K562 (cell line): ENCODE measurements at regions of chr1 and their contacts with region 1.

Region 1: DNA sequence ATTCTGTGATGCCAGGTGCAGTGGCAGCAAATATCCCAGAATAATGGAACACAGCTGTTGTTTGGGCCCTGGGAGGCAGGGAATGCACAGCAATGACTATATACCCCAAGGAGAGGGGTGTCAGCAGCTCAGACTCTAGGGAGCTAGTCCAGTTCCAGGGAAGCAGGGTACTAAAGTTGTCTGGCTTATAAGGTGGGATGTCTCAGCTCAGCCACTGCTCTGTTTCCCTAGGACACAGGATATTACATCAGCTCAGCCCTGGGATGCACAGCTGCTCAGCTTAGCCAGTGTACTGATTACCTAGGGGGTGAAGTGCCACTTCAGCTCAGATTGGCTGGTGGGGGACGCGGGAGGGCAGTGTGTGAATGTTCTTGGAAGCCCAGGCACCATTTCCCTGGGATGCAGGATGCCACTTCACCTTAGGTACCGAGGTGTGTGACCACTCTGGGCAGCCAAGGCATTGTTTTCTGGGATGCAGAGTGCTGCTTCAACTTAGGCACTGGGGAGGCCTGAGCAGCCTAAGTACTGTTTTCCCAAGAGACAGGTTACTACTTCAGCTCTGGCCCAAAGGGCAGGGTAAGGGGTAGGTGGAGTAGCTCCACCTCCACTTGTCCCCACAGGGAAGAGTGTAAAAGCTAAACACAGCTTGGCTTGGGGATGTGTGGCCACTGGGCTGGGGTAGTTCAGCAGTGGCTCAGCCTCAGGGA is 59.4 kb downstream of the DIPK1A start:
- DNase-seq: no peak
- ATAC-seq: peak; percentile 70
- H3K4me3 ChIP-seq: no peak overlapping the region
- H3K27ac ChIP-seq: no peak overlapping the region
- H3K4me1 ChIP-seq: 0 out of 5 replicates have a peak, but pooled peaks cover 0 to 5% of the 10 kb centered on the region in 2 experiments
- H3K27me3 ChIP-seq: no peaks in the 10 kb centered on the region
- CTCF ChIP-seq: no peak
- EP300 ChIP-seq: no peak
- POLR2A ChIP-seq: no peak
- RAD21 ChIP-seq: no peak

Region 2: GRCh38 chr1:92817986-92818764 is 83.7 kb before region 1 on chr1:
- CTCF ChIA-PET with region 1: no interaction called
- POLR2A ChIA-PET with region 1: no interaction called
- in situ Hi-C with region 1: no loop called
- intact Hi-C with region 1: no loop called
- DNase-seq: peak; percentile 42 to 57 (median 53)
- ATAC-seq: peak; percentile 81
- H3K4me3 ChIP-seq: no peak overlapping the region
- H3K27ac ChIP-seq: no peak overlapping the region
- H3K4me1 ChIP-seq: no peaks in the 10 kb centered on the region
- H3K27me3 ChIP-seq: no peaks in the 10 kb centered on the region
- CTCF ChIP-seq: peak; percentile 70 to 80 (median 71)
- EP300 ChIP-seq: no peak
- POLR2A ChIP-seq: no peak
- RAD21 ChIP-seq: peak; percentile 61 to 83

Region 3: GRCh38 chr1:92951141-92951582 is 49.3 kb after region 1 on chr1:
- CTCF ChIA-PET with region 1: no interaction called
- POLR2A ChIA-PET with region 1: no interaction called
- in situ Hi-C with region 1: no loop called
- intact Hi-C with region 1: loop called (anchors 5 kb)
- DNase-seq: peak in 2 of 4 experiments; percentile 49 to 67
- ATAC-seq: peak; percentile 86
- H3K4me3 ChIP-seq: no peak overlapping the region
- H3K27ac ChIP-seq: peak overlapping the region; percentile 23; the same call in 2 of the 3 replicates
- H3K4me1 ChIP-seq: peaks cover 6 to 28% of the 10 kb centered on the region in 2 experiments; a peak in 4 of 5 replicates
- H3K27me3 ChIP-seq: no peaks in the 10 kb centered on the region
- CTCF ChIP-seq: peak in 2 of 3 experiments; percentile 36 to 38; a peak in 4 of 6 replicates
- EP300 ChIP-seq: no peak; the same call in 1 of the 2 replicates
- POLR2A ChIP-seq: no peak
- RAD21 ChIP-seq: peak in 1 of 2 experiments; percentile 46; a peak in 2 of 4 replicates

Region 4: GRCh38 chr1:92961131-92961895 is 59.5 kb after region 1 on chr1 and contains the start of gene DIPK1A:
- CTCF ChIA-PET with region 1: no interaction called
- POLR2A ChIA-PET with region 1: no interaction called
- in situ Hi-C with region 1: no loop called
- intact Hi-C with region 1: no loop called
- DNase-seq: peak; percentile 75 to 93 (median 91)
- ATAC-seq: peak; percentile 77
- H3K4me3 ChIP-seq: peak within 1 kb of the TSS; percentile 57
- H3K27ac ChIP-seq: peak within 1 kb of the TSS; percentile 73
- H3K4me1 ChIP-seq: peaks cover 24 to 25% of the 10 kb centered on the region in 2 experiments; a peak in 4 of 5 replicates
- H3K27me3 ChIP-seq: no peaks in the 10 kb centered on the region
- CTCF ChIP-seq: peak in 2 of 3 experiments; percentile 7 to 11; a peak in 1 of 6 replicates
- EP300 ChIP-seq: no peak
- POLR2A ChIP-seq: peak; percentile 60; the same call in 1 of the 2 replicates
- RAD21 ChIP-seq: 0 out of 4 replicates have a peak, but pooled peaks of 1 of the 2 experiments have one; percentile 12
- polyA plus RNA-seq, gene DIPK1A: 2.4 to 2.5 TPM